Endothelial cell of umbilical vein (primary cell): ENCODE measurements at regions of chr22 and their contacts with region 1.

Region 1: GRCh38 chr22:40024201-40025061 is 29.7 kb downstream of the FAM83F start:
- DNase-seq: peak; percentile 39
- H3K4me3 ChIP-seq: no peak overlapping the region
- H3K27ac ChIP-seq: no peak overlapping the region
- H3K4me1 ChIP-seq: no peaks in the 10 kb centered on the region
- H3K27me3 ChIP-seq: no peaks in the 10 kb centered on the region
- CTCF ChIP-seq: peak; percentile 76 to 96
- POLR2A ChIP-seq: no peak

Region 2: GRCh38 chr22:39537975-39538374 is 486.5 kb before region 1 on chr22:
- CTCF ChIA-PET with region 1: interaction called, 157 read pairs
- POLR2A ChIA-PET with region 1: no interaction called
- dilution Hi-C with region 1: no loop called
- intact Hi-C with region 1: loop called (anchors 2 kb)
- DNase-seq: no peak
- H3K4me3 ChIP-seq: no peak overlapping the region
- H3K27ac ChIP-seq: no peak overlapping the region
- H3K4me1 ChIP-seq: peaks cover 1% of the 10 kb centered on the region
- H3K27me3 ChIP-seq: no peaks in the 10 kb centered on the region
- CTCF ChIP-seq: no peak
- POLR2A ChIP-seq: no peak

Region 3: GRCh38 chr22:39622881-39623367 is 401.5 kb before region 1 on chr22:
- CTCF ChIA-PET with region 1: interaction called, 27 read pairs
- POLR2A ChIA-PET with region 1: no interaction called
- dilution Hi-C with region 1: no loop called
- intact Hi-C with region 1: loop called (anchors 1 kb)
- DNase-seq: peak; percentile 28
- H3K4me3 ChIP-seq: no peak overlapping the region
- H3K27ac ChIP-seq: no peak overlapping the region
- H3K4me1 ChIP-seq: no peaks in the 10 kb centered on the region
- H3K27me3 ChIP-seq: peaks cover 0 to 7% of the 10 kb centered on the region in 2 experiments
- CTCF ChIP-seq: peak; percentile 51 to 66
- POLR2A ChIP-seq: no peak

Region 4: DNA sequence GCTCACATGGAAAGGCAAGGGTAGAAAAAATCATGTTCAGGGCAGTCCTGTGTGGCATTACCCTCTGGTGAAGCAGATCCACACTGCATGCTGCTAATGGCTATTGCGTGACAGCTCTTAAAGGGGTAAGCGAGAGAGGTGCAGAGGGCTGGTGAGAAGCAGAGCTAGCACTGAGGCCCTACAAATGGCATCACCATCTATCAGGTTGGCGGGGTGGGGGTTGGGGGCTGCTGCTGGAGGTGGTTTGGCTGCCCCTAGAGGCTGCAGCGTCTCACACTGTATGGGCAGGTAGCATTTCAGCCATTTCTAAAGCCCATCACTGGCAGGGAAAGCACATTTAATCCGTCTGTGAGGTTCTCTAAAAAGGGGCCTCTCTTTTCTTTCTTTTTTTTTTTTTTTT is 81.1 kb before region 1 on chr22:
- CTCF ChIA-PET with region 1: interaction called, 13 read pairs
- POLR2A ChIA-PET with region 1: no interaction called
- dilution Hi-C with region 1: no loop called
- intact Hi-C with region 1: no loop called
- DNase-seq: no peak
- H3K4me3 ChIP-seq: no peak overlapping the region
- H3K27ac ChIP-seq: no peak overlapping the region
- H3K4me1 ChIP-seq: no peaks in the 10 kb centered on the region
- H3K27me3 ChIP-seq: peaks cover 4 to 5% of the 10 kb centered on the region in 2 experiments
- CTCF ChIP-seq: peak in 1 of 2 donors; percentile 3
- POLR2A ChIP-seq: no peak

Region 5: GRCh38 chr22:40009292-40009769 is 15.1 kb before region 1 on chr22:
- CTCF ChIA-PET with region 1: interaction called, 16 read pairs
- POLR2A ChIA-PET with region 1: no interaction called
- dilution Hi-C with region 1: no loop called
- intact Hi-C with region 1: no loop called
- DNase-seq: no peak
- H3K4me3 ChIP-seq: no peak overlapping the region
- H3K27ac ChIP-seq: no peak overlapping the region
- H3K4me1 ChIP-seq: no peaks in the 10 kb centered on the region
- H3K27me3 ChIP-seq: peaks cover 12 to 15% of the 10 kb centered on the region in 2 experiments
- CTCF ChIP-seq: no peak
- POLR2A ChIP-seq: no peak

Region 6: GRCh38 chr22:40067639-40068038 is 43.2 kb after region 1 on chr22:
- CTCF ChIA-PET with region 1: no interaction called
- POLR2A ChIA-PET with region 1: no interaction called
- dilution Hi-C with region 1: no loop called
- intact Hi-C with region 1: no loop called
- DNase-seq: no peak
- H3K4me3 ChIP-seq: no peak overlapping the region
- H3K27ac ChIP-seq: no peak overlapping the region
- H3K4me1 ChIP-seq: no peaks in the 10 kb centered on the region
- H3K27me3 ChIP-seq: no peaks in the 10 kb centered on the region
- CTCF ChIP-seq: no peak
- POLR2A ChIP-seq: no peak

Region 7: DNA sequence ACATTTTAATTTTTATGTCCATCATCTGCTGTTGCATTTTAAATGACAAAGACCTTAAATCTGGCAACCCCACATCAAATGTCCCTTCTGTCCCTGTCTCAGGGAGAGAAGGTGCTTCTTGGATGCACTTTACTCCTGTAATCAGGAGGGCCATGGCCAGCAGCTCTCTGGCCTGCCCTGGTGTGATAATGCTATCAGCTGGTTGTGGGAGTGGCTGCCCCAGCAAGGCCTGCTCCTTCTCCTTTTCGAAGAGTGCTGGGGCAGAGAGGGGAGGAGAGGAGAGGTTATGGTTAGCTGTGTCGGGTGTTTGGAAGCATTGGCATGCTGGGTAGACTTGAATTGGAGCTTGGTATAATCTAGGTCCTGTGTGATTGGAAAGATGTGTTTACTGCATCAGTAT is 166.1 kb after region 1 on chr22:
- CTCF ChIA-PET with region 1: no interaction called
- POLR2A ChIA-PET with region 1: no interaction called
- dilution Hi-C with region 1: no loop called
- intact Hi-C with region 1: no loop called
- DNase-seq: no peak
- H3K4me3 ChIP-seq: no peak overlapping the region
- H3K27ac ChIP-seq: no peak overlapping the region
- H3K4me1 ChIP-seq: no peaks in the 10 kb centered on the region
- H3K27me3 ChIP-seq: no peaks in the 10 kb centered on the region
- CTCF ChIP-seq: no peak
- POLR2A ChIP-seq: no peak

Region 8: DNA sequence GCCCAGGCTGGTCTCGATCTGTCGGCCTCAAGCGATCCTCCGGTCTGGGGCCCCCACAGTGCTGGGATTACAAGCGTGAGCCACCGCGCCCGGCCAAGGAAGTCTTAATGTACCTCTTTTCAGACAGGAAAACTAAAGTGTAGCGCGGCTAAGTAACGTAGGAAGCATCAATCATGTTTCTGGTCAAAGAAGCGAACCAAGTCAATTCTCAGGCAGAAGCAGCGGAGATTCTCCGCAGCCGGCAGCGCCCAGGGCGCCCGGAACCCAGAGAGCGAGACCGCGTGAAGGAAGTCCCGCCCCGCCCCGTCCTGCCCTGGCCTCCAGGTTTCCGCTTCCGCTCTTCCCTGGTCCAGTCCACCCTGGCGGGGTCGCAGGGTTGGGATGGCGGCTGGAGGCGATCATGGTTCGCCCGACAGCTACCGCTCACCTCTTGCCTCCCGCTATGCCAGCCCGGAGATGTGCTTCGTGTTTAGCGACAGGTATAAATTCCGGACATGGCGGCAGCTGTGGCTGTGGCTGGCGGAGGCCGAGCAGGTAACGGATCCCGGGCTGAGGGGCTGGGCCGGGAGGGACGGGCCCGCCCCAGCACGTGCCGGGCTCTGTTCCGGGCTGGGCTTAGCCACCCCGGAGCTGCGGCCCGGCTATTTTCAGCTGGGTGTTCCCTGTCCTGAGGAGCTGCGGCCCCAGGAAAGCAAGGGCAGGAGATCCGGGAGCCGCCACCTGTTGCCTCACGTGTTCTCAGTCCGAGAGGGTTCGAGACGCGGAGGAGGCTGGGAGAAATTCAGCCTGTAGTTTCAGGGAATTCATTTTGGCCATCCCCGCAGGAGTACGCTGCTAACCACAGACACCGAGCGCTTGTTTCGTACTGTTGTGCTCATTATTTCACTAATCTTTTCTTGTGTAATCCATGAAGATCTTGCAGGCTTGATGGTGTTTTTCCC is 322.0 kb after region 1 on chr22 and contains the start of gene ADSL:
- CTCF ChIA-PET with region 1: interaction called, 17 read pairs
- POLR2A ChIA-PET with region 1: no interaction called
- dilution Hi-C with region 1: no loop called
- intact Hi-C with region 1: no loop called
- DNase-seq: peak; percentile 85
- H3K4me3 ChIP-seq: peak within 1 kb of the TSS; percentile 76 to 98 (median 90)
- H3K27ac ChIP-seq: peak within 1 kb of the TSS; percentile 51
- H3K4me1 ChIP-seq: peaks cover 16% of the 10 kb centered on the region
- H3K27me3 ChIP-seq: no peaks in the 10 kb centered on the region
- CTCF ChIP-seq: peak in 1 of 2 donors; percentile 34
- POLR2A ChIP-seq: peak; percentile 97
- total RNA-seq, gene ADSL: 86.2 and 103 TPM in 2 replicates